ENCODE measurements at regions of chr14 and their contacts with region 1.

Region 1: DNA sequence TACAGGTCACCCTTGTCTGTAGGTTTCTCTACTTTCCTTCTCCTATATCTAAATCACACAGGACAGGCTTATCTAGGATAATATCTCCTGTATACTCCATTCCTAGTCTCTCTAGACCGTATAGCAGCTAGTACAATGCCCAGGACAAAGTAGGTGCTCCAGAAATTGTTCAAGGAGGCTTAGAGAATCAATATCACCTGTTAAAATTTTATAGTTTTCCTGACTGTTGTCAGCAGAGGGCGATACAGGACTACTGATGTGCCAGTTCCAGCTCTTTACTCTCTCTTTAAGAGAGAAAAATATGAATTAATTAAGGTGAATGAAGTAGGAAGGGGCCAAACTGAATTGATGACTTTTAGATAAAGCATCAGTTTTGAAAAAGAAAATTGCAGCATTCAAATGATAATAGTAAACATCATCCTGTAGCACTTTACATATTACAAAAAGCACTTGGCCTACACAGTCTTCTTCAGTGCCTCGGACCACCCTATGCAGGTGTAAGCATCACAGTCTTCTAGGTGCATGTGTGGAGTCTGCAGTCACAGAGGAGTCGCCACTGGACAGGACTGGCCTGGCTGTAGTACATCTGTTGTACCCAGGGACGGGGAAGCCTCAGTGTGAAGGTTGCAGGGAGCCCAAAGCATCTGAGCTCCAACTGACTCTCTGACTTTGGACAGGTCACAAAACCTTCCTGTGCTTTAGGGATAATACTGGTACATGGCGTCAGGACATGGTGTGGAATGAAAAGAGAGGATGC is 61.9 kb upstream of the MAX start:
- DNase-seq: no peak
- ATAC-seq: peak; percentile 33
- H3K4me3 Mint-ChIP-seq: no peak overlapping the region
- H3K27ac Mint-ChIP-seq: peak overlapping the region; percentile 56
- H3K4me1 Mint-ChIP-seq: peaks cover 53% of the 10 kb centered on the region
- H3K27me3 Mint-ChIP-seq: no peaks in the 10 kb centered on the region
- CTCF ChIP-seq: peak; percentile 29

Region 2: DNA sequence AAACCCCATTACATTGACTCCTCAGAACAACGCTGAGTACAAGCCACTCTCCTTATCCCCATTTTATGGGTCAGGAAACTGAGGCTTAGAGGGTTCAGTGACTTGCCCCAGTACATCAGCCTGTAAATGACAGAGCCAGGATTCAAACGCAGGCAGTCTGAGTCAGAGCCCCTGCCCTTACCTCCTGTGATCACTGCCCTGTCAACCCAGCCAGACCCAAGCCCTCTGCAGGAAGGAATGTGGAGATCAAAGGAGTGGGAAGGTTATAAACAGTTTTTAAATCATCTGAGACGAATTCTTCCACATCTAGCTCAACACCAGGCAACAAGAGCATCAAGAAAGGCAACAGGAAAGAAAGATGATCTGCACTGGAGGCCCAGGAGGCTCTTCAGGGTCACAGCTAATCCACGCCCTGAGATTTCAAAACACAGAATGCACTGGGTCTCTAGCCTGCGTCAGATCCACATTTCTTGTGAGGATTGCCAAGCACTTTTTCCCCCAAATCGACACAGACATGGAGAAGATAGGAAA is 323.1 kb before region 1 on chr14:
- CTCF ChIA-PET with region 1: no interaction called
- POLR2A ChIA-PET with region 1: no interaction called
- intact Hi-C with region 1: no loop called
- DNase-seq: no peak
- ATAC-seq: no peak
- H3K4me3 Mint-ChIP-seq: no peak overlapping the region
- H3K27ac Mint-ChIP-seq: no peak overlapping the region
- H3K4me1 Mint-ChIP-seq: peaks cover 6% of the 10 kb centered on the region
- H3K27me3 Mint-ChIP-seq: peaks cover 28% of the 10 kb centered on the region
- CTCF ChIP-seq: no peak

Region 3: DNA sequence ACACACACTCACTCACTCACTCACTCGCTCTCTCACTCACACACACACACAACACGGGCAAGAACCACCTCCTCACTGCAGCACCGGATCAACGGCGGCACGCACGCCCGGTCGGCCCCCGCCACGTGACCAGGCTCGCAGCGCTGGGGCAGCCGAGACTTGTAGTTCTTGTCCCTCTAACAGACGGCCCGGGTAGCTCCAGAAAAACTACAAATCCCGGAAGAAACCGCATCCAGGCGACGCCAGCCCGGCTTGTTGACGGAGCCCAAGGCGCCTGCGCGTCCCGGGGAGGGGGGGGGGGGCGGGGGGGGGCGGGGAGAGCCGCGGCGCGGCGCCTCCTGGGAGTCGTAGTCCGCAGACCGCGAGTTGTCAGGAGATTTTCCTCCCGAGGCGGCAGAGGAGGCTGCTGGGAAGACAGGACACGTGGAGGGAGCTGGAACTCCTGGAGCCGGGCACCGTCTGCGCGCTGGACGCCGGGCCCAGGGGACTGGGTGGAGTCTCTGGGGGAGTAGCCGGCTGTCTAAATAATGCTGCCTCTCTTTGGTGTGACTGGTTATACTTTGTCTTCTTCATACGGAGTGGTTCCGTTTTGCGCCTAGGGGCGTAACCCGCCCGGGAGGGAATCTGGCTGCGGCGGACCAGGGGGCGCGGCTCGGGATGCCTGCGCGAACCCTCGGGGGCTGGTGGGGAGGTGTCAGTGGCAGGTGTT is 61.7 kb before region 1 on chr14 and contains the start of gene MAX:
- CTCF ChIA-PET with region 1: interaction called, 5 read pairs
- POLR2A ChIA-PET with region 1: interaction called, 6 read pairs
- intact Hi-C with region 1: loop called (anchors 1 kb)
- DNase-seq: peak; percentile 92
- ATAC-seq: peak; percentile 86
- H3K4me3 Mint-ChIP-seq: peak within 1 kb of the TSS; percentile 89
- H3K27ac Mint-ChIP-seq: peak within 1 kb of the TSS; percentile 95
- H3K4me1 Mint-ChIP-seq: peaks cover 42% of the 10 kb centered on the region
- H3K27me3 Mint-ChIP-seq: no peaks in the 10 kb centered on the region
- CTCF ChIP-seq: no peak
- total RNA-seq, gene MAX: 115 and 116 TPM in 2 replicates

Region 4: GRCh38 chr14:65222440-65222858 is 58.2 kb after region 1 on chr14:
- CTCF ChIA-PET with region 1: interaction called, 9 read pairs
- POLR2A ChIA-PET with region 1: interaction called, 45 read pairs
- intact Hi-C with region 1: loop called (anchors 1 kb)
- DNase-seq: no peak
- ATAC-seq: peak; percentile 91
- H3K4me3 Mint-ChIP-seq: peak overlapping the region; percentile 11
- H3K27ac Mint-ChIP-seq: peak overlapping the region; percentile 18
- H3K4me1 Mint-ChIP-seq: peaks cover 62% of the 10 kb centered on the region
- H3K27me3 Mint-ChIP-seq: no peaks in the 10 kb centered on the region
- CTCF ChIP-seq: peak; percentile 58

Region 5: DNA sequence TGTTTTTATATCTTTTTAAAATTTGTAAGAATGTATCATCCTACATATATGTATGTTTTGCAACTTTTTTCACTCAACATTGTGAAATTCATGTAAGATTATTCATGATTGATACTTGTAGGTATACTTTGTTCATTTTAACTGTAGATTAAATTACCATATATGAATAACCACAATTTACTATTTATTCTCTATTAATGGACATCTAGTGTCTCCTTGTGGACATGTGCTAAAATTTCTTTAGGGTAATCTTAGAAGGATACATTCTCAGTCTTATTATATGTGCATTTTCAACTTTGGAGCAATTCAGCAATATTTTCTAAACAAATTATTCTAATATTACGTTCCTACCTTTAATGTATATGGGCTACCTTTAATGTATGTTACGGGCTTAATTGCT is 440.7 kb after region 1 on chr14:
- CTCF ChIA-PET with region 1: interaction called, 3 read pairs
- POLR2A ChIA-PET with region 1: no interaction called
- intact Hi-C with region 1: loop called (anchors 1 kb)
- DNase-seq: no peak
- ATAC-seq: peak; percentile 21
- H3K4me3 Mint-ChIP-seq: no peak overlapping the region
- H3K27ac Mint-ChIP-seq: no peak overlapping the region
- H3K4me1 Mint-ChIP-seq: peaks cover 7% of the 10 kb centered on the region
- H3K27me3 Mint-ChIP-seq: no peaks in the 10 kb centered on the region
- CTCF ChIP-seq: no peak

Region 6: DNA sequence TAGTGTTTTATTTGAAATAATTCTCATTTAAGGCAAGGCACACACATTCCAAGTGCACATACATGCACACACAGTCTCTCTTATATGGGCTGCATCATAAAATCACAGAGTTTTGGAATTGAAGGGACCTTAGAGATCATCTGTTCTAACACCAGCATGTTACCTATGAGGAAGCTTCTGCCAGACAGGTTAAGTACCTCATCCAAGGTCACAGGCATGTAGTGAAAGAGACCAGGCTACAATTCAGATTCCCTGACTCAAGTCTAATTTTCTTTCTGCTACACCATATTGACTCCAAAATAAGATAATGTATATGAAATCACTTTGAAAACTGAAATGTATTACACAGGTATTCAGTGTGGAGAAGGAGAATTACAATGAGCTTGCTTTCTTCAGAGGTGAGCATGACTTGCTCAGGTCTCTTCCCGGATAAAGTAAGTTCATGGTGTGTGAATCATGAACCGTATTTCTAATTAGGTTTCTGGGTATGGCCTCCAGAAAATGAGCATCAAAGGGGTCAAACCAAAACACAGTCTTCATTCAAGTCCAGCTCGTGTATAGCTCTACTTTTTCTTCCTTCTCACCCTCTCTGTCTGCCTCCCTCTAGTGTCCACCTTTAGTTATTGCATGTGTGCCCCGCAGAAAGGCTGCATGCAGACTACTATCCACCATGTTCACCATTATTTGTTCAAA is 660.2 kb after region 1 on chr14:
- CTCF ChIA-PET with region 1: interaction called, 171 read pairs
- POLR2A ChIA-PET with region 1: interaction called, 12 read pairs
- intact Hi-C with region 1: loop called (anchors 1 kb)
- DNase-seq: no peak
- ATAC-seq: peak; percentile 99
- H3K4me3 Mint-ChIP-seq: no peak overlapping the region
- H3K27ac Mint-ChIP-seq: no peak overlapping the region
- H3K4me1 Mint-ChIP-seq: peaks cover 1% of the 10 kb centered on the region
- H3K27me3 Mint-ChIP-seq: peaks cover 5% of the 10 kb centered on the region
- CTCF ChIP-seq: peak; percentile 82

Region 7: GRCh38 chr14:66070509-66071319 is 906.5 kb after region 1 on chr14:
- CTCF ChIA-PET with region 1: interaction called, 25 read pairs
- POLR2A ChIA-PET with region 1: no interaction called
- intact Hi-C with region 1: loop called (anchors 1 kb)
- DNase-seq: peak; percentile 48
- ATAC-seq: peak; percentile 75
- H3K4me3 Mint-ChIP-seq: no peak overlapping the region
- H3K27ac Mint-ChIP-seq: no peak overlapping the region
- H3K4me1 Mint-ChIP-seq: no peaks in the 10 kb centered on the region
- H3K27me3 Mint-ChIP-seq: peaks cover 7% of the 10 kb centered on the region
- CTCF ChIP-seq: peak; percentile 63

Measured in activated B cell treated with CpG ODN at 0.5 μM for 24 hours (primary cell).